Activated CD4-positive, alpha-beta T cell treated with anti-CD3 and anti-CD28 coated beads for 36 hours (primary cell): ENCODE measurements at regions of chr19 and their contacts with region 1.

Region 1: DNA sequence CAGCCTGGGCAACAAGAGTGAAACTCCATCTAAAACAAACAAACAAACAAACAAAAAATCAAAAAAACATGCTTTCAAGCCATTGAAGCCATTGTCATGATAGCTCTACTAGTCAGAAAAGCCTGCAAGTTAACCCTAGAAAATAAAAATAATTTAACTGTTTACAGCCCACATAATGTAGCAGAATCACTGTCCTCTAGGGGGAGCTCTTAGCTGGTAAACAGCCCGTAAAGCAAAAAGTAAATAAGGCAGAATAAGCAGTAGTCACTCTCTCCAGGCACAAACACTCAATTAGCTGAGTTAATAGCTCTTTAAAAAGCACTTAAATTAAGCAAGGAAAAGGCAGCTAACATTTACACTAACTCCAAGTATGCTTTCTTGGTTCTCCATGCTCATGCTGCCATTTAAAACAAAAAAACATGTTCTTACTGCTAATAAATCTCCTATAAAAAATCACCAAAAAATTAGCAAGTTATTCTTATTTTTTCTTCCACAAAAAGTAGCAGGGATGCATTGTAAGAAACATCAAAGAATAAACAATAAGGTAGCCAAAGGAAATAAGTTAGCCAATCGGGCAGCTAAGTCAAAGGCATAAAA is 11.3 kb downstream of the LILRB4 start:
- DNase-seq: no peak
- ATAC-seq: no peak
- H3K4me3 Mint-ChIP-seq: no peak overlapping the region
- H3K27ac Mint-ChIP-seq: no peak overlapping the region
- H3K4me1 Mint-ChIP-seq: no peaks in the 10 kb centered on the region
- H3K27me3 Mint-ChIP-seq: peaks cover 8% of the 10 kb centered on the region

Region 2: DNA sequence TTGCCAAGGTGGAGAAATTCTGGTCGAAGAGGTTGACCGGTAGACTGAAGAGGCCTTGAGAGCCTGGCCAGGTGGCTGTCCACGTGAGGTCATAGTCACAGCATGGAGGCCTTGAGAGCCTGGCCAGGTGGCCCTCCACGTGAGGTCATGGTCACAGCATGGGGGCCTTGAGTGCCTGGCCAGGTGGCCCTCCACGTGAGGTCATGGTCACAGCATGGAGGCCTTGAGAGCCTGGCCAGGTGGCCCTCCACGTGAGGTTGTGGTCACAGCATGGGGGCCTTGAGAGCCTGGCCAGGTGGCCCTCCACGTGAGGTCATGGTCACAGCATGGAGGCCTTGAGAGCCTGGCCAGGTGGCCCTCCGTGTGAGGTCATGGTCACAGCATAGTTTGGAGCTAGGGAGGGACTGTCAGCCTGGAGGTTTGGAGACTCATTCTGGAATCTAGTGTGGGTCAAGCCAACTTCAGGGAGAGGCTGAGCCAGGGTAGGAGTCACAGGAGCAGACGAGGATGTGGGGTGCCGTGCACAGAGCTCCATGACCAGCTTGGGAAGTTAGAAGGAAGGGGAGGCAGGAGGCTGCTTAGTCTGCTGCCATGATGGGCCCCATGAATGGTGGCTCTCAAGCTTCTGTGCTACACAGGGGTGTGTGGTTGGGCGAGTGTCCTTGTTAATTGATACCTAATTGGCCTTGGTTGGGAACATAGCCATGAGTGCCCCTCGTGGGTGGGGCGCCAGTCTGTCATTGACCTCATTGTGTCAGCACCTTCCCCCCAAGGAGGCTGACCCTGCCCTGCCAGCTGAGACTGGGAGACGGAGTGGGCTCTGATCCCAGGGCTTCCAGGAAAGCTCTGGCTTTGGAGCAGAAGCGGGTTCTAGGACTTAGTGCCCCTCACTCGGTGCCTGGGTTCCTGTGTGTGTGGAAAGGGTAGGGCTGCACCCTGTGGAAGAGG is 214.6 kb before region 1 on chr19:
- CTCF ChIA-PET with region 1: no interaction called
- POLR2A ChIA-PET with region 1: no interaction called
- intact Hi-C with region 1: no loop called
- DNase-seq: no peak
- ATAC-seq: no peak
- H3K4me3 Mint-ChIP-seq: no peak overlapping the region
- H3K27ac Mint-ChIP-seq: peak overlapping the region; percentile 47
- H3K4me1 Mint-ChIP-seq: peaks cover 30% of the 10 kb centered on the region
- H3K27me3 Mint-ChIP-seq: no peaks in the 10 kb centered on the region

Region 3: GRCh38 chr19:54481322-54481930 is 192.7 kb before region 1 on chr19:
- CTCF ChIA-PET with region 1: interaction called, 59 read pairs
- POLR2A ChIA-PET with region 1: no interaction called
- intact Hi-C with region 1: loop called (anchors 1 kb)
- DNase-seq: peak; percentile 53
- ATAC-seq: peak; percentile 47
- H3K4me3 Mint-ChIP-seq: no peak overlapping the region
- H3K27ac Mint-ChIP-seq: no peak overlapping the region
- H3K4me1 Mint-ChIP-seq: peaks cover 2% of the 10 kb centered on the region
- H3K27me3 Mint-ChIP-seq: peaks cover 28% of the 10 kb centered on the region

Region 4: DNA sequence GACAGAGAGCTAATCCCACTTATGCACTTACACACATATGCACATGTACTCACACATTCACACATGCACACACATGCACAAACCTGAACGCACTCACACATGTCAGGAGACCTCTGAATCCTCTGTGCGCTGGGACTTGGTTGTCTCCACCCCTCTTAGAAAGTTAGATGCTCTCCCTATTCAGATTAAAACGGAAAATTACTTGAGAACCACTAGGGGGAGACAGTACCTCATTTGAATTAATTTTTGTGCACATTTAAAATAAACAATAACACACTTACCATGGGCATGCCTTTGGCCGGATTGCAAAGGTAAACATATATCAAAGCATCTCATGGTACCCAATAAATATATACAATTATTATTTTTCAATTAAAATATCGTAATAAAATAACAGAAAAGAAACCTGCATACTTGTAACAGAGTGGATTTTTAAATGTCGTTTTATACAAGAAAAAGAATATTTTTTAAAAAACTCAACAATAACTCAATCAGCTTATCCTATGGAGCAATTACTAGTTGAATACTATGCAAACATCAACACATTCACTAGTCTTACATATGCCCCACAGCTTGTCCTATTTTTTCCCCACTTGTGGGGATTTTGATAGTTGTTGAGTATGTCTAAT is 20.8 kb before region 1 on chr19:
- CTCF ChIA-PET with region 1: interaction called, 50 read pairs
- POLR2A ChIA-PET with region 1: no interaction called
- intact Hi-C with region 1: no loop called
- DNase-seq: no peak
- ATAC-seq: no peak
- H3K4me3 Mint-ChIP-seq: no peak overlapping the region
- H3K27ac Mint-ChIP-seq: no peak overlapping the region
- H3K4me1 Mint-ChIP-seq: no peaks in the 10 kb centered on the region
- H3K27me3 Mint-ChIP-seq: peaks cover 8% of the 10 kb centered on the region

Region 5: DNA sequence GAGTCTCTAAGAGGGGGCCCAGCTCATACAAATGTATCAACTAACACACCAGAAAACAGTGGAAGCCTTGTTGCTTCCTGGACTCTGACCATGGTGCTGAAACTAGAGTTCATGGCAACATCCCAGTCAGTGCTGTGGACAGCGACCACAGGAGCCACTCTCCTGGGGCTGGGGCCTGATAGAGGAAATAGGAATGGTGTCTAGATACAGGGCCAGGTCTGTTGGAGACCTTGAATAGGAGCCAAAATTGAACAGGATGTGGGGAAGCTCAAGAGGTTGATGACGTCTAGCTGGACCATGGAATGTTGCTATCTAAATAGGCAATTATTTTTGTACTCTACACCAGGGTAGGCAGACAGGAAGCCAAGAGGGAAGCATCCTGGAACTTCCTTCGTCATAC is 10.4 kb after region 1 on chr19:
- CTCF ChIA-PET with region 1: interaction called, 25 read pairs
- POLR2A ChIA-PET with region 1: no interaction called
- intact Hi-C with region 1: no loop called
- DNase-seq: peak; percentile 17
- ATAC-seq: no peak
- H3K4me3 Mint-ChIP-seq: no peak overlapping the region
- H3K27ac Mint-ChIP-seq: no peak overlapping the region
- H3K4me1 Mint-ChIP-seq: no peaks in the 10 kb centered on the region
- H3K27me3 Mint-ChIP-seq: peaks cover 29% of the 10 kb centered on the region

Region 6: GRCh38 chr19:54731191-54731590 is 57.1 kb after region 1 on chr19:
- CTCF ChIA-PET with region 1: no interaction called
- POLR2A ChIA-PET with region 1: no interaction called
- intact Hi-C with region 1: no loop called
- DNase-seq: no peak
- ATAC-seq: no peak
- H3K4me3 Mint-ChIP-seq: no peak overlapping the region
- H3K27ac Mint-ChIP-seq: no peak overlapping the region
- H3K4me1 Mint-ChIP-seq: no peaks in the 10 kb centered on the region
- H3K27me3 Mint-ChIP-seq: peaks cover 23% of the 10 kb centered on the region

Region 7: GRCh38 chr19:54928299-54928698 is 254.2 kb after region 1 on chr19:
- CTCF ChIA-PET with region 1: no interaction called
- POLR2A ChIA-PET with region 1: no interaction called
- intact Hi-C with region 1: loop called in 1 of 2 experiments (anchors 10 kb)
- DNase-seq: no peak
- ATAC-seq: no peak
- H3K4me3 Mint-ChIP-seq: no peak overlapping the region
- H3K27ac Mint-ChIP-seq: no peak overlapping the region
- H3K4me1 Mint-ChIP-seq: no peaks in the 10 kb centered on the region
- H3K27me3 Mint-ChIP-seq: no peaks in the 10 kb centered on the region